BJ (cell line): ENCODE measurements at regions of chr4 and their contacts with region 1.

Region 1: DNA sequence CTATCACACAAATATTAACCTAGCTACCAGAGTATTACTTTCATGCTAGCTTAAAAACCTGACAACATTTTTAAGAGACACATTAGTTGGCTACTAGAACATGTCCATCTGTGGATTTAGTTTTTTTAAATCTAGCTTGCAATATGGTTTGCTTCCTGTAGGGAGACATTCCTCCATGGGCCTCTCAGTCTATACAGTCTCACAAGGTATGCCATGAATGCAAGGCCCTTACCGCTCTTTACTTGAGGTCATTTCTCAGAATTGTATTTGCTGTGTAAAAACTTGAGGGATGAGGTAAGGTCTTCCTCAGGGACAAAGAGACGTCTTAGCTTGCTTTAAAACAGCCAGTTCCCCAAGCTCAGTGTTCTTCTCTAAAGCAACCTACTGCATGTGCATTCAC is 26.9 kb downstream of the UBA6 start:
- DNase-seq: no peak
- H3K4me3 ChIP-seq: no peak overlapping the region
- H3K27me3 ChIP-seq: no peaks in the 10 kb centered on the region
- CTCF ChIP-seq: no peak

Region 2: GRCh38 chr4:67694662-67695061 is 20.6 kb after region 1 on chr4:
- CTCF ChIA-PET with region 1: no interaction called
- POLR2A ChIA-PET with region 1: interaction called, 11 read pairs
- DNase-seq: no peak
- H3K4me3 ChIP-seq: no peak overlapping the region
- H3K27me3 ChIP-seq: no peaks in the 10 kb centered on the region
- CTCF ChIP-seq: no peak

Region 3: DNA sequence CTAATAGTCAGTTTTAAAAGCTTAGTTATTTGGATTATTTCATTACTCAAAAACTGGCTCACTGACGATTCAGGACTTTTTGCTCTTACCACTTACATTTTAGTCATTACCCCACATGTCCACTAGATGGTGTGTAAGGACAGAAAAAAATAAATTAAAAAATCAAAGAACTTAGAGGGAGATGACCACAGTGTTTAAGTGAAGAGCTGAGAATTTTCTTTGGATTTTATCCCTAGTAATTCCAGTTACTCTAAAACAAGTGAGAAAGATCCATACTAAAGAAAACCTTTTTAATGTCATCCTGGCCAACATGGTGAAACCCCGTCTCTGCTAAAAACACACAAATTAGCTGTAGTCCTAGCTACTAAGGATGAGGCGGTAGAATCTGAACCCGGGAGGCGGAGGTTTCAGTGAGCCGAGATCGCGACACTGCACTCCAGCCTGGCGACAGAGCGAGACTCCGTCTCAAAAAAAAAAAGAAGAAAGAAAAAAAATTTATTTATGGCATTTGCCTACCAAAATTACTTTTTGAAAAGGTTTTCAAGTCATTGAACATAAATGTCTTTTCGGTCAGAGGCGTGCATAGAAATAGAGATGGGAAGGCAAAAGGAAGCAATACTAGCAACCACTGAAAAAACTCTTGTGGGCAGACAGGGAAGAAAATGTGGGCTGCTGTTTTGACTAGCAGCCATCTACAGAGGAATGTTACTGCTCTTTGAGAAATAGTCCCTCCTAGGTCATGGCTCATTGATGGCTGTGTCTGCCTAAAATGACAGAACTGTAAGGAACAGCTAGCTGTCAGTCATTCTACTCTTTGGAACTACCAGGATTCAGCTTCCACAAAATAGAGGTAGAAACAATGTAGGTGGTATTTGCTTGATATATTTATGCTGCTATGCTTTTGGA is 598.0 kb after region 1 on chr4:
- CTCF ChIA-PET with region 1: no interaction called
- POLR2A ChIA-PET with region 1: no interaction called
- DNase-seq: peak; percentile 28
- H3K4me3 ChIP-seq: peak overlapping the region; percentile 33
- H3K27me3 ChIP-seq: no peaks in the 10 kb centered on the region
- CTCF ChIP-seq: peak; percentile 67